Right ventricle myocardium inferior (tissue), 1 donor: ENCODE measurements at regions of chr14 and their contacts with region 1.

Region 1: DNA sequence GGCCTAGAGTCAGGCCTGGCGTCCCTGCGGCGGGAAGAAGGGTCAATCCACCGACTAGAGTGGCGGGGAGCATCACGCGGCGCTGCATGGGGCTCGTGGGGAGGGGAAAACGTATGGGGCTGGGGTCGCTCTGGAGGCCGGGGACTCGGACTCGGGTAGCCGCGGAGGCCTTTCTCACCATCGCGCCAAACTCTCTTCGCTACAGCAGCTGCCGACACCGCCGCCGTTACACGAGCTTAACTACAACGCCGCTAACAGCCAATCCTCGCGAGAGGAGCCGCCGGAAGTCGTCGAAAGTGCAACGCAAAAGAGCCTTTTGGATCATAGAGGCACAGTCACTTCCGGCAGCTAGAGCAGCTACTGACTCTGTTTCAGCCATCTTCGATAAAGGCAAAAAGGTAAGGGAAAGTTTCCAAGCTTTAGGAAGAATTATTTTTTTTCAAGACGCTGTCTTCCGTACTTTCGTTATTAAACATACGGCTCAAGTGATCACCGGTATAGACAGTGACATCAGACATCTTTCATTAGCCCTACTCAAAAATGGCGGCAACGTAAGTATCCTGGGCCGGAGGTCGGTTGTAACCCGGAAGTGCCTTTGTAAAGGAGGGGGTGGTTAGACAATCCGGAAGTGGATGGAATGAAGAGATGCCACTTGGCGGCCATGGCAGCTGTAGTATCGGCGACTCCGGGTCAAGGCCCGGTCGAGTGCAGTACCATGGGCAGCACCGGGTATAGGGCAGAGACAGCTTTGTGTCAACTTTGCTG is at the starts of genes ERH and SLC39A9:
- DNase-seq: peak; percentile 97
- ATAC-seq: peak; percentile 97
- total RNA-seq, gene ERH: 110 TPM
- total RNA-seq, gene SLC39A9: 18.0 TPM

Region 2: GRCh38 chr14:69766984-69767368 is 368.7 kb after region 1 on chr14 and contains the start of gene SRSF5:
- intact Hi-C with region 1: loop called (anchors 5 kb)
- DNase-seq: peak; percentile 99
- ATAC-seq: peak; percentile 98
- total RNA-seq, gene SRSF5: 120 TPM